ENCODE measurements at regions of chr14 and their contacts with region 1.

Region 1: GRCh38 chr14:31561155-31561846 is at the start of gene NUBPL:
- DNase-seq: peak; percentile 98
- ATAC-seq: peak; percentile 97
- H3K4me3 Mint-ChIP-seq: peak within 1 kb of the TSS; percentile 92
- H3K27ac Mint-ChIP-seq: peak within 1 kb of the TSS; percentile 95
- H3K4me1 Mint-ChIP-seq: peaks cover 24% of the 10 kb centered on the region
- H3K27me3 Mint-ChIP-seq: peaks cover 2% of the 10 kb centered on the region
- CTCF ChIP-seq: no peak
- total RNA-seq, gene NUBPL: 14.3 to 14.4 TPM

Region 2: GRCh38 chr14:31543969-31544799 is 17.1 kb before region 1 on chr14:
- CTCF ChIA-PET with region 1: no interaction called
- POLR2A ChIA-PET with region 1: no interaction called
- intact Hi-C with region 1: no loop called
- DNase-seq: no peak
- ATAC-seq: peak; percentile 45
- H3K4me3 Mint-ChIP-seq: no peak overlapping the region
- H3K27ac Mint-ChIP-seq: no peak overlapping the region
- H3K4me1 Mint-ChIP-seq: no peaks in the 10 kb centered on the region
- H3K27me3 Mint-ChIP-seq: peaks cover 18% of the 10 kb centered on the region
- CTCF ChIP-seq: no peak

Region 3: GRCh38 chr14:31660728-31661127 is 99.4 kb after region 1 on chr14:
- CTCF ChIA-PET with region 1: no interaction called
- POLR2A ChIA-PET with region 1: no interaction called
- intact Hi-C with region 1: no loop called
- DNase-seq: no peak
- ATAC-seq: no peak
- H3K4me3 Mint-ChIP-seq: no peak overlapping the region
- H3K27ac Mint-ChIP-seq: no peak overlapping the region
- H3K4me1 Mint-ChIP-seq: peaks cover 5% of the 10 kb centered on the region
- H3K27me3 Mint-ChIP-seq: no peaks in the 10 kb centered on the region
- CTCF ChIP-seq: no peak

Region 4: DNA sequence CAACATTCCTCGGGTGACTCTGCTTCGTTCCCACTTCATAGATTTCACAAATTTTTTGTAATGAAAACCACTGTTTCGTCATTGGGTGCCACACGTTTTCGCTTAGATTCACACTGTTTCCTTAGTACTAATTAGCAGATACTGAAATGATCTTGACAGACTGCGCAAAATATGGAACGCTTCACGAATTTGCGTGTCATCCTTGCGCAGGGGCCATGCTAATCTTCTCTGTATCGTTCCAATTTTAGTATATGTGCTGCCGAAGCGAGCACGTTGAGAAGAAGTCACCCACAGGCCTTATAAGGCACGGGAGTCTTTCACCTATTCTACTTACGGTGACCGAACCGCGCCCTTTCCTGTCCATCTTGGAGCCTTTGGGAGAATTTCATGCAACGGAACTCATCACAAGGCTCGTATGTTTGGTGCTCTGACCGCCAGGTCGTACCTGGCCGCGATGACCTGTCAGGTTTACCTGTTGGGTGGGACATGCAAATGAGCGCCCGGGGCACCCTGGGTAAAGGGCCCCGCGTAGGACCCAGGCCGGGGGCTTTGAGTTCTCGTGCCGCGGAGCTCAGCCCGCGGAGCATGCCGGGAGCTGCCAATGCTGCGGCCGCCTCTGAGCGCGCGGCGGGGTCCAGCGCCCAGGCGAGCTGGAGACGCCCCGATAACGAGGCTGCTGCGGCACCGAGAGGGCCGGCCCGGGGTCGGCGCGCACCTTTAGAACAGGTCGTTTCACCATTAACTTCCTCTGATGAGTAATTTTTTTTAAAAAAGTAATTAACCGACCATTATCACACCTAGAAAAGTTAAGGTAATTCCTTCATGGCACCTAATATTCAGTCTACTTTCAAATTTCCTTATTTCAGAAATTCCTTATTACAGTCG is 641.9 kb after region 1 on chr14 and contains the start of gene RNU6-8:
- CTCF ChIA-PET with region 1: no interaction called
- POLR2A ChIA-PET with region 1: no interaction called
- intact Hi-C with region 1: loop called (anchors 5 kb)
- DNase-seq: peak; percentile 89
- ATAC-seq: peak; percentile 83
- H3K4me3 Mint-ChIP-seq: peak within 1 kb of the TSS; percentile 78
- H3K27ac Mint-ChIP-seq: peak within 1 kb of the TSS; percentile 98
- H3K4me1 Mint-ChIP-seq: peaks cover 40% of the 10 kb centered on the region
- H3K27me3 Mint-ChIP-seq: no peaks in the 10 kb centered on the region
- CTCF ChIP-seq: no peak
- total RNA-seq, gene RNU6-8: not detected

Measured in activated CD8-positive, alpha-beta T cell treated with anti-CD3 and anti-CD28 coated beads for 36 hours (primary cell).